Activated CD4-positive, alpha-beta memory T cell treated with anti-CD3 and anti-CD28 coated beads for 36 hours (primary cell): ENCODE measurements at regions of chr1 and their contacts with region 1.

Region 1: DNA sequence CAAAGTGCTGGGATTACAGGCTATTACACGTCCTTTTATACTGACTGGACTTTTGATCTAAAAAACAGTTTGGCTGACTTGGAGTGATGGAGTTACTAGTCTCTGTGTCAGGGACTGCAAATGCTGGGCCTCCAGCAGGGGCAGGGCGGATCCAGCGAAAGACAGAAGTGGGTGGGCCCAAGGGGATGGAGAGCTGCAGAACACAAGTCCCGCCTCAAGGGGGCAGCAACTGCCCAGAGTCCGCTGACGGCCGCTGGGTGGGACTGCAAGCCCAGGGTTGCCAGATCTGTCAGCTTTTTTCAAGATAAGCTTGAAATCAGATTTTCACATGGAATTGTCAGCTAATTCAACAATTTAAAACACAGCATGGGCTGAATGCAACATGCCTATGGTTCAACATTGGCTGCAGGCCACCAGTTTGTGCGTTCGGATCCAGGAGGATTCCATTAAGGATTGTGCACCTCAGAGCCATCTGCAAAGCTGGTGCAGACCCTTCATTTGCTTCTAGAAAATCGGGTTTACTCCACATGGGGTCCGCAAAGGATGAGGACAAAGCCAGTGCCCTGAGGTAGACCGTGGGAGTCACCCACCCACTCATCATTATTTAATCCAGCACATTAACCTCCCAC is 10.7 kb downstream of the STMN1 start:
- DNase-seq: peak; percentile 93
- H3K4me3 Mint-ChIP-seq: no peak overlapping the region
- H3K27ac Mint-ChIP-seq: no peak overlapping the region
- H3K4me1 Mint-ChIP-seq: peaks cover 12% of the 10 kb centered on the region
- H3K27me3 Mint-ChIP-seq: no peaks in the 10 kb centered on the region

Region 2: DNA sequence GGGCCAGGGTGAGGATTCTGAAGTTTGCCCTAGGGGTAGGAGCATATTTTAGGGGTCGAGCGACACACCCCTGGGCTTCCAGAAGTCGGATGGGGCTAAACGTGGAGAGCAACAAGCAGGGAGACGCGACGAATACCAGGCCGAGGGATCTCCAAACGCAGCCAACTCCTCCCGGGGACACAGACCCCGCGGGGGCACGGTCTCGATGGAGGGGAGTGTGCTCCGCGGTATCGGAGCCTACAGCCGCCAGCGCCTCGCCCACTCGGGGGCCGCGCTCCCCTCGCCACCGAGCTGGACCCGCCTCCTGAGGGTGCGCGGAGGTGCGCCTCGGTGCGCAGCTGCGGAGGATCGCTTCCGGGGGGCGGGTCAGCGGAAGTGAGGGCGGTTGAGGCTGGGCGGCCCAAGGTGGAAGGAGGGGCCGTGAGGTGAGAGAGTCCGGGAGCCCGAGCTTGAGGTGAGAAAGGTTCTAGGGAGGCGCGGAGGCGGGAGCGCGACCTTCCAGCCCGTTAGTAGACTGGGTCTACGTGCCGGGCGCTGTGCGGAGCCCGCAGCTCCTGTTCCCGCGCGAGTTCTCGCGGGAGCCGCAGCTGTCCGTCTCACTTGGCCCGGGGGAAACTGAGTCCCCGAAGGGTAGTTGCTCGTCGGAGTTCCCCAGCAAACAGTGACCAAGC is 75.8 kb before region 1 on chr1 and contains the start of gene MTFR1L:
- CTCF ChIA-PET with region 1: interaction called, 7 read pairs
- POLR2A ChIA-PET with region 1: no interaction called
- intact Hi-C with region 1: loop called (anchors 2 kb)
- DNase-seq: peak; percentile 97
- H3K4me3 Mint-ChIP-seq: peak within 1 kb of the TSS; percentile 95
- H3K27ac Mint-ChIP-seq: peak within 1 kb of the TSS; percentile 89
- H3K4me1 Mint-ChIP-seq: peaks cover 33% of the 10 kb centered on the region
- H3K27me3 Mint-ChIP-seq: no peaks in the 10 kb centered on the region
- total RNA-seq, gene MTFR1L: 28.0 to 31.1 TPM

Region 3: DNA sequence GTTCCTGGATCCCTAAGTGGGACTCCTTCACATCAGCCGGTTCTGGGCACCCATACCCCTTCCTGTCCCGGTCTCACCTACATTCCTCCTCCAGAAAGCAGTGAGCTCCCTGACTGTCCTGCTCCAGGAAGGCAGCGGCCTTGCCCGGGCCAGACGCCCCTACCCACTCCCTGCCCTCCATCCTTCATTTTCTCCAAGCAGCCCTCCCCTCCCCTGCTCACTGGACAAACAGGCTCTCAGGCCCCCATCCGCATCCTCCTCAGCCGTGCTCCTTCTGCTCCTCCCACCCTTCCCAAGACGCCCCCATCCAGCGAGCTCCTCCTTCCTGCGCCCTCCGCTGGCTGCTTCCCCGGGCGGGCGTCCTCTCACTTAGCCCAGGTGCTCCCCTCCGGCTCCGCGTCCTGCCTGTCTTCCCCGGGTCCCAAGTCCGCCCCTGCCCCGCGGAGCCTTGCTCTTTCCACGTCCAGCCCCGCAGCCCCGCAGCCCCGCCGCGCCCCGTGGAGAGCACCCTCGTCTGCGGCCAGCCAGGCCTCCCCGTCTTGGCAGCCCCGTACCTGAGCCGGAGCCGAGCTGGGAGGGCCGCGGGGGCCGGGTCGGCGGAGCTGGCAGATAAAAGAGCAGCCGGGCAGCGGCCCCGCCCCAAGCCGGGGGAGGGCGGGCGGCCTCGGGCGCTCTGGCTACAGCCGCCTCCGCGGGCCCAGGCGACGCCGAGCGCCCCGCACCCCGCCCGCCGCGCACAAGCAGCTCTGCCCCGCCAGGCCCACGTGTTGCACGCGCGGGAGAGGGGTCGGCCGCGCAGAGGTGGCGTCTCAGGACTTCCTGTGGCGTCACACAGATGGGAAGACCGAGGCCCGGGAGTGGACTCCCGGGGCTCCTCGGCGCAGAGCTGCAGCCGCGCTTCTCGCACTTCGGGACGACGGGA is 20.3 kb before region 1 on chr1 and contains the start of gene PAQR7:
- CTCF ChIA-PET with region 1: interaction called, 25 read pairs
- POLR2A ChIA-PET with region 1: no interaction called
- intact Hi-C with region 1: no loop called
- DNase-seq: peak; percentile 69
- H3K4me3 Mint-ChIP-seq: peak within 1 kb of the TSS; percentile 82
- H3K27ac Mint-ChIP-seq: no peak within 1 kb of the TSS
- H3K4me1 Mint-ChIP-seq: peaks cover 6% of the 10 kb centered on the region
- H3K27me3 Mint-ChIP-seq: no peaks in the 10 kb centered on the region
- total RNA-seq, gene PAQR7: 4.1 to 4.2 TPM

Region 4: DNA sequence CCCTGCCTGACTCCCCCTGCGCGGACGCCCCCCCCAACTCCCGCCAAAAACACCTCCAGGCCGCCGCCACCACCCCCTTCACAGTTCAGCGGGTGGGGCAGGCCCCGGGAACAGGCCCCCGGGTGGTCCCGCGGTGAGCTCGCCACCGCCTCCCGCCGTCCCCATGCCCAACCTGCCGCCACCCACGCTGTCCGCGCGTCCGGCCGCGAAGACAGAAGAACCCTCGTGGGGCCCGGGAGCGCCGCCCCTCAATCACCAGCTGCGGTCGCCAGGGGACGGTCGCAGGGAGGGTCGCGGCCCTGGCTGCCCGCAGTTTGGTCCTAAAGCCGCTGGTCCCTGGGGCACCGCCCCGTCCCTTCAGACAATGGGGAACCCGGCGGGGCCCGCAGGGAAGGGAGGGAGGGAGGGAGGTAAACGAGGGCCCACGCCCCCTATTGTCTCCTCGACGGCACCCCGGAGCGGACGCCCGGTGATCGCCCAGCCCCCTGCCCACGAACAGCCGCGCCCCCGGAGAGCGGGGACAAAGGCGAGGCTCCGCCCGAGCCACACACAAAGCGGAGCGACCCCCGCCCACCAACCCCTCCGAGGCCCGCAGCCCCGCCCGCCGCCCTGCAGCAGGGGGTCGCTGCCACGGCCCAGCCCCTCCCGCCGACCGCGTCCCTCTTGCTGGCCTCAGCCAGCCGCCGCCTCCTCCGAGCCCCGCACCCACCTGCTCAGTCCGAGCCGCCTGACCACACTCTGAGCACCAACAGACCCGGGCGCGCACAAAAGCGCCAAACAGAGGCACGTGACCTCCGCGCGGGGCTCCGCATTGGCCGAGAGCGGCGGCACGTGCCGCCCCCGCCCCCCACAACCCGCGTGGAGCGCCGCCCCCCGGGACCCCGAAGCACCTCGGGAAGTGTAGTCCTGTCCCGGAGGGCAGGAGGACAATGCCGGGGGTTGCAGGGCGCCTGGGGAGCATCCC is 10.5 kb after region 1 on chr1 and contains the start of gene STMN1:
- CTCF ChIA-PET with region 1: interaction called, 89 read pairs
- POLR2A ChIA-PET with region 1: interaction called, 7 read pairs
- intact Hi-C with region 1: loop called (anchors 1 kb)
- DNase-seq: peak; percentile 95
- H3K4me3 Mint-ChIP-seq: peak within 1 kb of the TSS; percentile 84
- H3K27ac Mint-ChIP-seq: peak within 1 kb of the TSS; percentile 89
- H3K4me1 Mint-ChIP-seq: peaks cover 23% of the 10 kb centered on the region
- H3K27me3 Mint-ChIP-seq: no peaks in the 10 kb centered on the region
- total RNA-seq, gene STMN1: 619 to 630 TPM

Region 5: DNA sequence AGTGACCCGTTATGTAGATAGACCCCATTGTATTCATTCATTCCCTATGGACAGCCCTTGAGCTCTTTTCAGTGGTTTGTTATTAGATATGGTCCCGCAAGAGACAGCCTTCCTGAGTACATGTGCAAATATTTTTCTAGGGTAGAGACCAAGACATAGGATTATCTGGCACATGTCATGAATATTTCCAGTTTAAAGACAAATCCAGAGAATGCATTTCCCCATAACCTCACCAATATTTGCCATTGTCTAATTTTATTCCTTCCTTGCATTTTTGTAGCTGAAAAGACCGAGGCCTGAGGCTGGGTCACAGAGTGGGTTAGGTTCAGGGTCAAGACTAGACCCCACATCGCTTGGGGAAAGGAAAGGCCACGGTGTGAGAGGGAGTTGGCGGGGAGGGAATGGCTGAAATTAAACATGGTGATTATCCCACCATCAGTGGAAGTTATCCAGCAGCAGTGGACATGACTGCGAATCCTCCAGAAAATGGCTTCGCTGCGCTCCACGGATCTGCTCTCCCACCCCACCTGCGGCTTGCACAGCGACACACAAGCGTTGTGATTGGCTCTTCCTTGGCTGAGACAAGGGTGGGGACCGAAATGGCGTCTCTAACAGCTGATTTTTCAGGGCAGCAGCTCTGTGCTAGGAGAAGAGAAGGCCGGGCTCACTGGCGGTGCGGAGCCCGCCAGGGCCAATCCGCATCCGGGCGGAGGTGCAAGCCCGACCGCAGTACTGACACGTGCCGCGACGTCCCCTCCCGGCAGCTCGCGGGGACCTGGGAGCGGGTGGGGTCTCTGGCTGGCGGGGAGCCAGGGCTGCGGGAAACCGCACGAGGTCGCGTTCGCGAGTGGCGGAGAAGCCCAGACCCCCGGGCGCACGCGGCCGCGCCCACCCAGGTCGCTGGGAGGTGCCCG is 26.8 kb after region 1 on chr1:
- CTCF ChIA-PET with region 1: interaction called, 14 read pairs
- POLR2A ChIA-PET with region 1: no interaction called
- intact Hi-C with region 1: no loop called
- DNase-seq: peak; percentile 66
- H3K4me3 Mint-ChIP-seq: peak overlapping the region; percentile 70
- H3K27ac Mint-ChIP-seq: no peak overlapping the region
- H3K4me1 Mint-ChIP-seq: peaks cover 27% of the 10 kb centered on the region
- H3K27me3 Mint-ChIP-seq: peaks cover 1% of the 10 kb centered on the region

Region 6: DNA sequence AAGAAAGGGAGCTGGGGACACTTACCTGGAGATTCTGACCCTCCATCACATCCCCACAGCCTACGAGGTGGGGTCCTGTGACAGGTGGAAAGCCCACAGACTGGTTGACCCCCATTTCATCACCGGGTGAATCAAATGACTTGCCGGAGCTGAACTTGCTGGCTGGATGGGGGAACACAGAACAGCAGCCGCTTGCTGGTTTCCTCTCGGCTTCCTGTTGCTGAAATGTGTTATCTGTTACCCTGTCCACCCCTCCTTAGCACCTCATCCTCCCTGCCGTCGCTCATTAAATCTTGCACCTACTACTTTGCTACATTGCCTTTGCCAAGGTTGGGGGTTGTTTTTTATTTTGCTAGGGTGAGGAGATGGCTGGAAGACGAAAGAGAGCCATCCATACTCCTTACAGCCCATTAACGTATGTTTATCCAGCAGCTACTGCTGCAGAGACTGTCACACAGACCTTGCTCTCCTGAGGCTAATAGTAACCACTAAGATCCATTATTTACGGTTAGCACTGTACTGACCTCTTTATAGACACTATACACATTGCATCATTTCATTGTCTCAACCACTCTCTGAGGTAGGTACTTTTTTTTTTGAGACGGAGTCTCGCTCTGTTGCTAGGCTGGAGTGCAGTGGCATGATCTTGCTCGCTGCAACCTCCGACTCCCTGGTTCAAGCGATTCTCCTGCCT is 95.4 kb after region 1 on chr1:
- CTCF ChIA-PET with region 1: interaction called, 260 read pairs
- POLR2A ChIA-PET with region 1: interaction called, 3 read pairs
- intact Hi-C with region 1: no loop called
- DNase-seq: peak; percentile 62
- H3K4me3 Mint-ChIP-seq: peak overlapping the region; percentile 62
- H3K27ac Mint-ChIP-seq: peak overlapping the region; percentile 2
- H3K4me1 Mint-ChIP-seq: peaks cover 36% of the 10 kb centered on the region
- H3K27me3 Mint-ChIP-seq: no peaks in the 10 kb centered on the region